BJ (cell line): ENCODE measurements at regions of chr2 and their contacts with region 1.

Region 1: GRCh38 chr2:70142590-70143313 is 48.1 kb downstream of the C2orf42 start:
- DNase-seq: peak; percentile 89
- H3K4me3 ChIP-seq: peak overlapping the region; percentile 63
- H3K27me3 ChIP-seq: no peaks in the 10 kb centered on the region
- CTCF ChIP-seq: peak; percentile 95

Region 2: DNA sequence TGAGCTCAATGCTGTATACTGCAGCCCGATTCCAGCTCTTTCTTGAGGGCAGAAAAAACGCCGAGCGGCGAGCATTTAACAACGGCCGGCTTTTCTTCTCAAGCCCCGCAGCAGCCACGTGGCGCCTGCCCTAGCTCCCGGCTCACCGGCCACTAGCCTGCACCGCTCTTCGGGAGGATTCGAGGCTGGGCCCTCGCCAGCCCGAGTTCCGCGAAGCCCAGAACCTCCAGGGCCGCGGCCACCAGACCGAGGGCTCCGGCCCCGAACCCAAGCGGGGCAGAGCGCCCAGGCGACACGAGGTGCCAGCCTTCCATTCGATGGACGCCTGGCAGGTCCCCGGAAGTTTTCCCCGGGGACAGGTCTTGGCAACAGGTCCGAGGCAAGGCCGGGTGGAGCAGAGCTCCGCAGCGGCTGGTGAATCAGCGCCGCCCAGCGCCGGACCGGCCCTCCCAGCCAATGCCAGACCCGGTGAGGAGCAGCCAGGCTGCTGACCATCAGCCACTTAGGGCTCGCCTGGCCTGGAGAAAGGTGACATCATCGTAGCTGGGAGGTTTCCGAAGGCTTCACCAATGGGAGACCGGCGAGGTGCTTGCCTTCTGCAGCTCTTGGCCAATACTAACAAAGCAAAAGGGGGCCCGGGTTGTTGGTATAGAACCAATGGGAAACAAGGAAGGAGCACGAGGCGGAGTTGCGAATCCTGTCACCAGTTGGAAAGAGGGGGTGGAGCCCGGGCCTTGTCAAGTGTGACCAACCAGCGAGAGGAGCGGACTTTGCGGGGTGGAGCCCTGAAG is 228.4 kb before region 1 on chr2:
- CTCF ChIA-PET with region 1: interaction called, 39 read pairs
- POLR2A ChIA-PET with region 1: interaction called, 8 read pairs
- DNase-seq: peak; percentile 100
- H3K4me3 ChIP-seq: peak overlapping the region; percentile 78
- H3K27me3 ChIP-seq: no peaks in the 10 kb centered on the region
- CTCF ChIP-seq: peak; percentile 18; the same call in 1 of the 2 replicates

Region 3: GRCh38 chr2:70190418-70191243 is 47.9 kb after region 1 on chr2 and contains the start of gene C2orf42:
- CTCF ChIA-PET with region 1: no interaction called
- POLR2A ChIA-PET with region 1: interaction called, 12 read pairs
- DNase-seq: peak; percentile 87
- H3K4me3 ChIP-seq: peak within 1 kb of the TSS; percentile 76
- H3K27me3 ChIP-seq: no peaks in the 10 kb centered on the region
- CTCF ChIP-seq: peak; percentile 37
- polyA plus RNA-seq, gene C2orf42: 9.8 and 12.1 TPM in 2 replicates

Region 4: DNA sequence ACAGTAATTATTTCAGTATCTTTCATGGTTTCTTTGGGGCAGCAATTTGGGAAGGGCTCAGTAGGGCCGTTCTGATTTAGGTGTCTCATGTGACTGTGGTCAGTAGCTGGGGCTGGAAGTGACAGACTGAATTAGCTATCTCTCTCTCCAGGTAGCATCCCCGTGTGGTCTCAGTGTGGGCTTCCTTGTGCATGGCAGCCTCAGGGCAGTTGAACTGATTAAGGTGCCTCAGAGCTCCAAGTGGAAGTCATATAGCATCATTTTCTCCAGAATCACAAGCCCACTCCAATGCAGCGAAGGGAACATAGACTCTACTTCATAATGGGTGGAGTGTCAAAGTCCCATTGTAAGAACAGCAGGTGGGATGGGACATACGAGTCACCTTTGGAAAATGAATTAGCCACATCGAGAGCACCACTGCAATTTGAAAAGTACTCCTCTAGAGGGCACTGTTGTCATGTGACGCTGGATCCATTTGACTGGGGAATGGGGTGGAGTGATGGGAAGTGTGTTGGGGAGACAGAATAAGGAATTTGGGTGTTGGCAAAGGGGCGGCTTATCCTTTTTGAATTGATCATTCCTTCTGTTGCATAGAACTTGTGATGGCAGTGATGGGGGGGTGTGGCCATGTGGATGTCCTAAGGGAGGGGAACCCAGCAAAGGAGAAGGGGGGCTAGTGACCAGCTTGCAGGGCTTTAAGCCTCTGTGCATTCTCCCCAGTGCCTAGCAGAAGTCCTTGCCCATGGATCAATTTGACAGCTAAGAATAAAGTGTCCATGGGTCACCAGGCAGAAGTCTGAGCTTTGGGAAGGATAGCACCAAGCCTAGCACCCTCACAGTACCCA is 198.4 kb after region 1 on chr2:
- CTCF ChIA-PET with region 1: no interaction called
- POLR2A ChIA-PET with region 1: no interaction called
- DNase-seq: no peak
- H3K4me3 ChIP-seq: no peak overlapping the region
- H3K27me3 ChIP-seq: no peaks in the 10 kb centered on the region
- CTCF ChIP-seq: peak; percentile 82